Left cardiac atrium (tissue), 4 donors: ENCODE measurements at regions of chrX and their contacts with region 1.

Region 1: DNA sequence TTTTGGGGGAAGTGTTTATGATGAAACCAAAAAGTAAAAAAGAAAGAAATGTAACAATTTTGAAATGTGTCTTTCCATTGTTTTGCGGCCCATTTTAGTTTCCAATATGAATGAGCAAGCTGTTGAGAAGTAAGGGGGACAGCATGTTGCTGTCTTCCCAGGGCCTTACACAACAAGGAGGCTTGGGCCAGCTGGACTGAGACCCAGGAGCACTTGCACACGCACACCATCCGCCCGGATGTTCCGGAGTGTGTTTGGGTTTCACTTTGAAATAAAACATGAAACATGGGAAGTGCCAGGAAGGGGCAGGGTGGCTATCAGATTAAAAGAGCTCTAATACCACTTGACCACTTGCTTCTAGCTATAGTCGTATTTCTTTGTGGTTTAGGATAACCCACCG is 144.4 kb downstream of the NHS start:
- DNase-seq: peak; percentile 66
- ATAC-seq: peak; percentile 79 to 86

Region 2: DNA sequence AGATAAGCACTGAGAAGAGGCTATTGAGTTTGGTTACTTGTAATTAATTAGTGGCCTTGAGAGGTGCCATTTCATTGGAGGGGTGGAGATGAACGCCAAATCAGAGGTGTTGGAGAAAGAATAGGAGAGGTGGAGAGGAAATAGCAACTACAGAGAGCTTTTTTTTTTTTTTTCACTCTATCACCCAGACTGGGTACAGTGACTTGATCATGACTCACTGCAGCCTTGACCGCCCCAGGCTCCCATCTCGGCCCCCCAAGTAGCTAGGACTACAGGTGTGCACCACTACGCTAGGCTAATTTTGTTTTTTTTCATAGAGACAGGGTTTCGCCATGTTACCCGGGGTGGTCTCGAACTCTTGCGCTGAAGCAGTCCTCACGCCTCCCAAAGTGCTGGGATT is 139.1 kb before region 1 on chrX:
- intact Hi-C with region 1: loop called in 1 of 2 experiments (anchors 10 kb)
- DNase-seq: no peak
- ATAC-seq: no peak

Region 3: GRCh38 chrX:17474892-17475291 is 44.5 kb before region 1 on chrX:
- intact Hi-C with region 1: no loop called
- DNase-seq: no peak
- ATAC-seq: peak in 1 of 2 donors; percentile 37